Activated CD8-positive, alpha-beta T cell treated with anti-CD3 and anti-CD28 coated beads for 36 hours (primary cell): ENCODE measurements at regions of chr18 and their contacts with region 1.

Region 1: GRCh38 chr18:74551936-74552555 is 17.7 kb downstream of the CNDP1 start:
- DNase-seq: peak; percentile 91
- ATAC-seq: peak; percentile 99
- H3K4me3 Mint-ChIP-seq: no peak overlapping the region
- H3K27ac Mint-ChIP-seq: no peak overlapping the region
- H3K4me1 Mint-ChIP-seq: no peaks in the 10 kb centered on the region
- H3K27me3 Mint-ChIP-seq: peaks cover 7% of the 10 kb centered on the region
- CTCF ChIP-seq: peak; percentile 72

Region 2: DNA sequence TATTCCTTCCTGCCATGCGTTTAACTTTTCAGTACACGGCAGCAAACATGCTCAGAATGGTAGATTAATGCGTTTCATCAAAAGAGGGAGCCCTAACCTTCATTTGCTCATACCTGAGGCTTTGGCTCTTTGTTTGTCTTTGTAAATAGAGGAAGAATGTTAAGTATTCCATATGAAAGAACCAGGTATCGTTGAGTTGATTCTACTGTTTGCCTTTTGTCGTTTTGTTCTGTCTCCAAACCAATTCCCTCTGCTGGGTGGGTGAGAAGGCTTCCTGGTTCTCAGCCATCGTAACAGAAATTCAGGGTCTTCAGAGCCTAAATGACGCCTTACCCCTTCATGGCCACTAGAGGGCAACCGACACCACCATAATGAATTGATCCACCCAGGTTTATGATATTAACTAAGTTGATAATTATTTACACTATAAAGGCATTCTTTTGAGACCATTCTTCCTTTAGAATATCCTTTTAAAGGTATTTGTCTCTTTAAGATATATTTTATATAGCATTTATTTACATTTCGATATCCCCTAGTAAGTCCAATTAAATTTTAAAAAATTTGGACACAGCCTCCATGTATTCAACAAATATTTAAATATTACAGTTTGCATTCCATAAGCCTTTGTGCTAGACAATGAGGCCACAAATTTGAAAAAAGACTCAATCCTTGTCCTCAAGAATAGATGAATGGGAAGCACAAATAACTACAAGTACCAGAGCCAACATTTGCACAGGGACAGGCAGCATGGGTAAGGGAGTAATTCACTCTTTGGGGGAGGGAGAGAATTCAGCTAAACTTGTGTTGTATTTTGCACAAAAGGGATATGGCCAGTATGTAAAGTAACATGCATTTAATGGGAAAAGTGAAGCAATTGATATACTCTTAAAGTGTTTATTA is 355.6 kb before region 1 on chr18:
- CTCF ChIA-PET with region 1: interaction called, 31 read pairs
- POLR2A ChIA-PET with region 1: no interaction called
- intact Hi-C with region 1: loop called (anchors 2 kb)
- DNase-seq: peak; percentile 65
- ATAC-seq: peak; percentile 99
- H3K4me3 Mint-ChIP-seq: peak overlapping the region; percentile 75
- H3K27ac Mint-ChIP-seq: peak overlapping the region; percentile 79
- H3K4me1 Mint-ChIP-seq: peaks cover 4% of the 10 kb centered on the region
- H3K27me3 Mint-ChIP-seq: peaks cover 2% of the 10 kb centered on the region
- CTCF ChIP-seq: peak; percentile 88

Region 3: DNA sequence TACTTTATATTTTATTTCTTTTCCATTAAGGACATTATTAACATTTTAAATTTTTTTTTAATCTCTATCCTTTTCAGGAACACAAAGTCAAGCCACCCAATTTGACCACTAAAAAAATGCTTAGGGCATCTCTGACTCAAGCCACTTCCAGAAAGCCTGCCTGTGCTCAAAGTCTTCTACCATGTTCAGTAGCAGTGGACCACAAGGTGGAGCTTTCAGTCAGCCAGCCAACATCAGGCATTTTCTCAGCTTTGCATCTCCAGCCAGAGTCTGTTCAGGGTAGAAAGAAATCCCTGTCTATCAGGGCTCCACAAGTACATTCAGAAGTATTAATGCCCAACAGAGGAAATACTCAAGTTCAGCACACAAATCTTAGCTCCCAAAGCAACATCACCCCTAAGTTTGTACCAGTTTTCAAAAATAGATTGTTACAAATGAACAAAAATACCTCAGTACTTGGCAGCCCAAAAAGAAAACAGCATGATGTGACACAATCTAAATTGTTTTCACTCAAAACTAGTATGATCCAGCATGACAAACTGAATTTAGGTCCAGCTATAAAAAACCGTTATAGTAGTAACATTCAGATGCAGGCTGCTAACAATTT is 198.8 kb before region 1 on chr18:
- CTCF ChIA-PET with region 1: interaction called, 67 read pairs
- POLR2A ChIA-PET with region 1: no interaction called
- intact Hi-C with region 1: loop called (anchors 2 kb)
- DNase-seq: peak; percentile 72
- ATAC-seq: peak; percentile 86
- H3K4me3 Mint-ChIP-seq: no peak overlapping the region
- H3K27ac Mint-ChIP-seq: no peak overlapping the region
- H3K4me1 Mint-ChIP-seq: peaks cover 6% of the 10 kb centered on the region
- H3K27me3 Mint-ChIP-seq: no peaks in the 10 kb centered on the region
- CTCF ChIP-seq: peak; percentile 73

Region 4: DNA sequence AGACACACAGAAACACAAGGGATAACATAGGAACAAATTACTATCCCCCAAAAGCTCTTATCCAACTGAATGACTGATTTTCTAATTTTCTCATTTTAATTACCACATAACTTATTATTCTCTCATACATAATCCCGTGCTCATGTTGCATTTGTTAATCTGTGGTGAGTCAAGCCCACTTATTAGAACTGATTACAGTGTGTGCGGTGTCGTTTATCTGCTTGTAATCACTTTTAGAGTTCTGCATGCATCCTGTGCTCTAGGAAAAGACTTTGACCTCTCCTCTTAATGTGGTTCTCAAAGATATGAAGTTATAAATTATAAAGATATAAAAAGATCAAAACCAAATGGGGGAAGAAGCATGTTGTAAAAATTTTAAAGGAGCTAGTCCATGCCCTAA is 12.0 kb after region 1 on chr18:
- CTCF ChIA-PET with region 1: interaction called, 14 read pairs
- POLR2A ChIA-PET with region 1: no interaction called
- intact Hi-C with region 1: no loop called
- DNase-seq: no peak
- ATAC-seq: no peak
- H3K4me3 Mint-ChIP-seq: no peak overlapping the region
- H3K27ac Mint-ChIP-seq: no peak overlapping the region
- H3K4me1 Mint-ChIP-seq: no peaks in the 10 kb centered on the region
- H3K27me3 Mint-ChIP-seq: peaks cover 10% of the 10 kb centered on the region
- CTCF ChIP-seq: no peak